Posterior vena cava (tissue), 2 donors: ENCODE measurements at regions of chr7 and their contacts with region 1.

Region 1: DNA sequence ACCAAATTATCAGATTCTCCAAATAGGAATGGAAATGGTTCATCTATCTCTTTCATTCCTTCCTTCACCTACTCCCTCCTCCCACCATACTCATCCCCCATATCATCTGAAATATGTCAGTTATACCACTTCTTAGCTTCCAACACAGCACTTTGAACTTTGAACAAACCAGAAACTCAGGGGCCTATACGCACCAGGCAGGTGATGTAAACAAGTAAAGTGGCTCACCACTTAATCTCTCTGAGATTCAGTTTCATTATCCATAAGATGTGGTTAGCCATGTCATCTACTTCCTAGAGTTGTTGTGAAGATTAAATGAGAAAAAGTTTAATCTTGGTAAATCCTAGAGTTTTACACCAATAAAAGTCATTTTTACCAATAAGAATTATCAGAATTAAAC is 65.9 kb upstream of the LRRN3 start:
- DNase-seq: no peak

Region 2: GRCh38 chr7:110568932-110569331 is 456.1 kb before region 1 on chr7:
- intact Hi-C with region 1: no loop called
- DNase-seq: no peak

Region 3: DNA sequence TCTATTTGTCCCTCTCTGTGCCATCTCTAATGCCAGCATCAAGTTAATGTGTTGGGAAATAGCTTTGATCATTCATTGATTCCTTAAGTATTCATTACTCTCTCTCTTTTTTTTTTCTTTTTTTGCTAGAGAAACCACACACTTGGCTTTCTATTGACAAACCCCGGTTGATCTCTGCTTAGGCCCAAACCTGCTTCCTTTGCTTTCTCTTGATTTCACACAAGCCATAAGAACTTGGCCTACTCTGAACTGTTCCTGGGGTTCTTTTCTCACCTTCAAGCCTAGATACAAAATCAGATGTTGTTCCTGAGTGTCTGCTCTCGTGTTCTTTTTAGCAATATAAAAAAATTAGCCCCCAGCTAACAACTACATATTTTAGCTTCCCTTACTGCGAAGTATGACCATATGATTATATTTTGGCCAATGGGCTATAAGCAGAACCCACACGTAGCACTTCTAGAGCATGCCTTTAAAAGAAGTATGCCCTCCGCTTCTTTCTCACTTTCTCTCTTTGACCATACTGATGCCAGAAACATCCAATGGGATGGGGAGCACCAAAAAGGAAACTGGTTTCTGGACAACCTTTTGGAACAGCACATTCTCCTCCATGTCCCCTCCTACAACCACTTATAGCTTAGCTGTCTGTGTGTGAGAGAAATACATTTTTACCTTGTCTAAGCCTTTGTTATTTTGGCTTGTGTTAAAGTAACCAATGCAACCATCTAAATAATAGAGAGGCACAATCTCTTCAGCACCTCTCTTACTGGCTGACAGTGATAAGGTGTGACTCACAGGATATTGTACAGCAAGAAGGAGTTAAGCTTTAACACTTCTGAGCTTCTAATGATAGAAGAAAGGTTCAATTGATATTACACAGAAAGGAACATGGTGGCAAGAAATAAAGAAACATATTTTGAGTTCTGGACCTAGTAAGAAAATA is 30.7 kb before region 1 on chr7:
- intact Hi-C with region 1: loop called in 1 of 2 experiments (anchors 1 kb)
- DNase-seq: no peak